Activated CD4-positive, alpha-beta T cell treated with anti-CD3 and anti-CD28 coated beads for 36 hours (primary cell): ENCODE measurements at regions of chr1 and their contacts with region 1.

Region 1: GRCh38 chr1:246012341-246012740 is 494.7 kb downstream of the SMYD3 start:
- DNase-seq: peak; percentile 6
- ATAC-seq: no peak
- H3K4me3 Mint-ChIP-seq: no peak overlapping the region
- H3K27ac Mint-ChIP-seq: no peak overlapping the region
- H3K4me1 Mint-ChIP-seq: no peaks in the 10 kb centered on the region
- H3K27me3 Mint-ChIP-seq: no peaks in the 10 kb centered on the region

Region 2: GRCh38 chr1:246117066-246117791 is 104.9 kb after region 1 on chr1:
- CTCF ChIA-PET with region 1: no interaction called
- POLR2A ChIA-PET with region 1: no interaction called
- intact Hi-C with region 1: loop called in 1 of 2 experiments (anchors 5 kb)
- DNase-seq: peak; percentile 34
- ATAC-seq: peak; percentile 86
- H3K4me3 Mint-ChIP-seq: peak overlapping the region; percentile 5
- H3K27ac Mint-ChIP-seq: peak overlapping the region; percentile 35
- H3K4me1 Mint-ChIP-seq: peaks cover 19% of the 10 kb centered on the region
- H3K27me3 Mint-ChIP-seq: no peaks in the 10 kb centered on the region

Region 3: GRCh38 chr1:246280551-246280950 is 268.2 kb after region 1 on chr1:
- CTCF ChIA-PET with region 1: no interaction called
- POLR2A ChIA-PET with region 1: no interaction called
- intact Hi-C with region 1: loop called in 1 of 2 experiments (anchors 5 kb)
- DNase-seq: no peak
- ATAC-seq: no peak
- H3K4me3 Mint-ChIP-seq: no peak overlapping the region
- H3K27ac Mint-ChIP-seq: no peak overlapping the region
- H3K4me1 Mint-ChIP-seq: no peaks in the 10 kb centered on the region
- H3K27me3 Mint-ChIP-seq: no peaks in the 10 kb centered on the region

Region 4: DNA sequence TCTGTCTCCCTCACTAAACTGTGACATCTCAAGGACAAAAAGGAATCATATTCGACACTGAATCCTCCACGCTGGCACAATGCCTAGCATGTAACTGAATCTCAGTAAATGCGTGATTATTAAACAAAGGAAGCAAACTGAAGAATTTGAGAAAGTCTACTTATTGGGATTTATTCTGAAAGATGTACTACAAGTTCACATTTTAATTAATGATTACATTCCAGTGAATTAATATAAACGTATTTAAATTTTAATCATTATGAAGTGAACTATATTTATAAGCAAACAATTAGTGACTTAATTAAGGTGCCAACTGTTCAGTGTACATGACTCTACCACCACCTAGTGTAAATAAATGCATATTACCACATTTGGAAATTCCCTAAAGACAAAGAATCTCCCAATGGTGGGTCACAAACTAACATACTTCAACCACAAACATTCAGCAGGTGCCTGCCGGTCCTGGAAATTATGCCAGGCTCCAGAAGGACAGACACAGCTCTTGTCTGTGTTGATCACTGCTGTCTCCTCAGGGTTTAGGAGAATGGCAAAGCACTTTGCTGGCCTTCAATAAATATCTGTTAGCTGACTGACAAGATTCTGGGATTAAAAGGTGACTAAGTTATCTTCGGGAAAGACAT is 438.4 kb after region 1 on chr1:
- CTCF ChIA-PET with region 1: interaction called, 12 read pairs
- POLR2A ChIA-PET with region 1: no interaction called
- intact Hi-C with region 1: loop called (anchors 1 kb)
- DNase-seq: no peak
- ATAC-seq: no peak
- H3K4me3 Mint-ChIP-seq: no peak overlapping the region
- H3K27ac Mint-ChIP-seq: no peak overlapping the region
- H3K4me1 Mint-ChIP-seq: peaks cover 13% of the 10 kb centered on the region
- H3K27me3 Mint-ChIP-seq: no peaks in the 10 kb centered on the region

Region 5: GRCh38 chr1:246497331-246497915 is 485.1 kb after region 1 on chr1:
- CTCF ChIA-PET with region 1: interaction called, 9 read pairs
- POLR2A ChIA-PET with region 1: no interaction called
- intact Hi-C with region 1: loop called (anchors 1 kb)
- DNase-seq: no peak
- ATAC-seq: peak; percentile 78
- H3K4me3 Mint-ChIP-seq: no peak overlapping the region
- H3K27ac Mint-ChIP-seq: no peak overlapping the region
- H3K4me1 Mint-ChIP-seq: peaks cover 10% of the 10 kb centered on the region
- H3K27me3 Mint-ChIP-seq: no peaks in the 10 kb centered on the region